ENCODE measurements at regions of chrX and their contacts with region 1.

Region 1: GRCh38 chrX:147376601-147377422 is 534.9 kb upstream of the FMR1 start:
- DNase-seq: no peak
- H3K4me3 Mint-ChIP-seq: no peak overlapping the region
- H3K27ac Mint-ChIP-seq: no peak overlapping the region
- H3K4me1 Mint-ChIP-seq: no peaks in the 10 kb centered on the region
- H3K27me3 Mint-ChIP-seq: no peaks in the 10 kb centered on the region
- CTCF ChIP-seq: no peak

Region 2: GRCh38 chrX:146278381-146278780 is 1098.4 kb before region 1 on chrX:
- CTCF ChIA-PET with region 1: no interaction called
- intact Hi-C with region 1: loop called (anchors 5 kb)
- DNase-seq: no peak
- H3K4me3 Mint-ChIP-seq: no peak overlapping the region
- H3K27ac Mint-ChIP-seq: no peak overlapping the region
- H3K4me1 Mint-ChIP-seq: no peaks in the 10 kb centered on the region
- H3K27me3 Mint-ChIP-seq: no peaks in the 10 kb centered on the region
- CTCF ChIP-seq: no peak